ENCODE measurements at regions of chr4 and their contacts with region 1.

Region 1: DNA sequence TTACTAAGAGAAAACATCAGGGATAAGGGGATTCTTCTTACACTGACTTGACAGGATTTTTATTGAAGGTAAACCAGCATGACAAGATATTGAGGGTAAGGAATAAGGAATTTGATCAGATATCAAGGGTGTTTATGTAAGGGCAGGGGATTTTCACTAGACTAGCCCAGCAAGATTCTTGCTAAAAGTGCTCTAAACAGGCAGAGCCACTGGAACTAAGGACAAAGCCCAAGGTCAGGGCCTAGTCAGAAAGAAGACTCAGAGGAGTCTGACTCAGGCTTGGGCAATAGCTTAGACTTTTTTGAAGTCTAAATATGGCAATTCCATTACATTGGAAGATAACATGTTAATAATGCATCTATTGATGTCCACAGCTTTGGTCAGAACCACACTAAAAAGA is 6.5 kb upstream of the GLRA3 start:
- DNase-seq: no peak
- H3K4me3 ChIP-seq: no peak overlapping the region
- CTCF ChIP-seq: no peak
- POLR2A ChIP-seq: no peak

Region 2: DNA sequence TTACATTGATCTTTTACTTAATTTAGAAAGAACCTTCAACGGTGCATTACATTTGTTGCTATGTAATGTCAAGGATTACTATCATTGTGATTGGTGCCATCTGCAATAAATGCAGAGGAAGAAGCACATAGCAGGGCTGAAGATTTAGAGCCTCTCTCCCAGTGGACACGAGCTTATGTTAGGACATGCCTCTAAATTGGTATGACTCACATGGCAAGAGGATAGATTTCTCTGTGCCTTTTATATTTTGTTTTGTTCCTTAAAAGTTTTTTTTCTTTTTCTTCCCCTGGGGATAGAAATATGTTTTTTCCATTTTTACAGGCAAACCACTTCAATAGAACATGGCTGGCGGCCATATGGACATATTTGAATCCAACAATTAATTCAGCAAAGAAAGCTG is 1100.5 kb before region 1 on chr4:
- intact Hi-C with region 1: loop called (anchors 5 kb)
- DNase-seq: no peak
- H3K4me3 ChIP-seq: no peak overlapping the region
- CTCF ChIP-seq: no peak
- POLR2A ChIP-seq: no peak

Region 3: GRCh38 chr4:176548571-176548970 is 1713.0 kb after region 1 on chr4:
- intact Hi-C with region 1: no loop called
- DNase-seq: no peak
- H3K4me3 ChIP-seq: no peak overlapping the region
- CTCF ChIP-seq: no peak
- POLR2A ChIP-seq: no peak